ENCODE measurements at regions of chr4 and their contacts with region 1.

Region 1: DNA sequence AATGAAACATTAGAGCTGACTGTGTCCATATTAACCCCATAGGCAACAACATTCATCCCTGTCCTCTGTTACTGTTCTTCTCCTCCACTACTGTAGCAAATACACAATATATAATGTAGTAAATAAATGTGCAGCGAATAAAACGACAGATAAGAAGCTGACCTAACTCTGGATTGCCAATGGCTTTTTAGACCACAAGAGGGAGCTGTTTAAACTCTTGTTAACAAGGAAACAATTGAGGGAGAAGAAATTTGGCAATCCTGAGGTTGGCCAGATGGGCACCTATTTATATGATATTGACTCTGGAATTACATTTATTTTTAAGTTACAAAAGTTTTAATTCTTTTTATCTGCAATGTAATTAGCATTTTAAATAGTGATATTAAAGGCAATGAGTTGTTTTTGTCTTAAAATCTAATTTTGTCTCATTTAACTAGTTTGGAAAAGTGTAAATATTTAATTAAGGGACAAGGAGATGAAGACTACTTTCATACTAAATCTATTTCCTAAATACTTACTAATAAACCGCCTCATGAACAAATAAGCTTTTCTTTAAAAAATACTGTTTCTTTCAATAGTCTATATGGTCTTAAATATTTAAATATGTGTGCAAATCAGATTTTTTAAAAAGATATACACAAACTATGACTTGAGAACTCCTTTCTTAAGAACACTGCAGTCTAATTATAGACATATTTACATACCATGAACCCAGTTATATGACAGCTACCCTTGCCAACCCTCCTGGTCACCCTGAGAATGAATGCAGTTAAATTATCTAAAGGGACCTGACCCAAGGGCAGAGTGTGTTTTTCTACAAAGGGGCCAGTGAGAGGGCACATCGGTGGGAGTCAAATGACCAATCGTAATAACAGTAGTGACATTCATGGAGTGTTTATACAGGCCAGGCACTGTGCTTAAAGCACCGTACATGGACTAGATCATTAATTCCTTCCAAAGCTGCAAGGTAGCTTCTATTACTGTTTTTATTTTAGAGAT is 52.9 kb upstream of the HPF1 start:
- ATAC-seq: peak in 6 of 8 experiments; percentile 38 to 77 (median 56)
- H3K4me3 ChIP-seq: no peak overlapping the region
- H3K27ac ChIP-seq: no peak overlapping the region
- H3K4me1 ChIP-seq: no peaks in the 10 kb centered on the region

Region 2: GRCh38 chr4:168815379-168816345 is 995.0 kb before region 1 on chr4:
- in situ Hi-C with region 1: no loop called
- ATAC-seq: peak in 2 of 8 experiments; percentile 27 to 38
- H3K4me3 ChIP-seq: no peak overlapping the region
- H3K27ac ChIP-seq: no peak overlapping the region
- H3K4me1 ChIP-seq: peaks cover 11 to 14% of the 10 kb centered on the region in 2 donors

Region 3: GRCh38 chr4:169446824-169447223 is 363.8 kb before region 1 on chr4:
- in situ Hi-C with region 1: no loop called
- ATAC-seq: no peak
- H3K4me3 ChIP-seq: no peak overlapping the region
- H3K27ac ChIP-seq: no peak overlapping the region
- H3K4me1 ChIP-seq: no peaks in the 10 kb centered on the region

Region 4: GRCh38 chr4:170008371-170008770 is 197.7 kb after region 1 on chr4:
- in situ Hi-C with region 1: loop called in 1 of 9 experiments (anchors 25 kb)
- ATAC-seq: no peak
- H3K4me3 ChIP-seq: no peak overlapping the region
- H3K27ac ChIP-seq: no peak overlapping the region
- H3K4me1 ChIP-seq: no peaks in the 10 kb centered on the region

Region 5: GRCh38 chr4:170027181-170027829 is 216.7 kb after region 1 on chr4:
- in situ Hi-C with region 1: loop called in 6 of 9 experiments (anchors 25 kb)
- ATAC-seq: peak; percentile 42 to 64 (median 48)
- H3K4me3 ChIP-seq: peak overlapping the region; percentile 58 to 80 (median 61)
- H3K27ac ChIP-seq: no peak overlapping the region
- H3K4me1 ChIP-seq: peaks cover 0 to 3% of the 10 kb centered on the region in 2 donors